Head of caudate nucleus (tissue), 42 donors: ENCODE measurements at regions of chr5 and their contacts with region 1.

Region 1: GRCh38 chr5:111278845-111279504 is 54.8 kb downstream of the CAMK4 start:
- DNase-seq: peak in 24 of 42 donors; percentile 11 to 75 (median 46)

Region 2: DNA sequence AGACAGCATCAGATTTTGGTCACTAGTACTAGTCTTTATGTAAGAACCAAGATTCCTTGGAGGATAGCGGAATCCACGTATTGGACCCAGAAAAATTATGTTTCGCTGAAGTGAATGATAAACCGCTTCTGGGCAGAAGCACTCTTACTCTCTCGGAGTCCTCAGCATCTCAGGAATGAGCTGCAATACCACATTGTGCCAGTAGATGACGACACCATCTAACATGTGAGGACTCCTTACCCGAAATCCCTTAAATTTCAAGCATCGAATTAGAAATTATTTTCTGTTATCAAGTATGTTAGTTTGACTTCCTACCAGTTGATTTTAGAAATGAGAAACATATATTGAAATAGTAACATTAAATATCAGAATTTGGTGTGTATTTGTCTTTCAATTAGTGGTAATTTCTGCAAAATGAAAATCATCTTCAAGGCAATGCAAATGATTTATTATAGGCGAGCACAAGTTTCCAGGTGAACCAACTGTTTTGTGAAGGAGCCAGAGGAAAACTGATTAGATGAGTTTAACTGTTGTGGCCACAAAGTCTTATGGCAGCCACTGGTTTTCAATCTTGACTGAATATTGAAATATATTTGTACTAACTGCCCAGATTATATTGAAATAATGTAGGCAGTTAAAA is 120.8 kb before region 1 on chr5:
- intact Hi-C with region 1: loop called (anchors 5 kb)
- DNase-seq: peak in 41 of 42 donors; percentile 12 to 94 (median 82)